ENCODE measurements at regions of chr12 and their contacts with region 1.

Region 1: GRCh38 chr12:117025481-117026151 is 73.6 kb downstream of the TESC start:
- DNase-seq: peak; percentile 79 to 92 (median 86)
- ATAC-seq: peak; percentile 91 to 93 (median 92)
- H3K4me3 ChIP-seq: no peak overlapping the region
- H3K27ac ChIP-seq: peak overlapping the region in 3 of 4 donors; percentile 28 to 65 (median 56)
- H3K4me1 ChIP-seq: peaks cover 10 to 22% (median 19%) of the 10 kb centered on the region in 3 donors
- H3K27me3 ChIP-seq: no peaks in the 10 kb centered on the region
- CTCF ChIP-seq: peak; percentile 88 to 95 (median 91)

Region 2: DNA sequence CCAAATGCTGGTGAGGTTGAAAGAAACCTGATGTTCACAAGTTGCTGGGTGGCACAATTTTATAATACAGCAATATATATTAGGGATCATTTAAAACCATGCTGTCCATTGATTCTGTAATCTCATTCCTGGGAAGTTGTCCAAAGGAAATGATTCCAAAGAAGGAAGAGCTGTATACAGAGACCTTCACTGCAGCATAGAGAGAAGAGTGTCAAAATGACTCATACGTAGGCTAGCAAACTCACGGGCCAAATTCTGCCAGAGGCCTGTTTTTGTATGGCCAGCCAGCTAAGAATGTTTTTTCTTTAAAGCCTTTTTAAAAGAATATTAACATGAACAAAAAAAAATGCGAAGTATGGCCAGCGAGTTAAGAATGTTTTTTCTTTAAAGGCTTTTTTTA is 678.9 kb before region 1 on chr12:
- intact Hi-C with region 1: no loop called
- DNase-seq: peak in 1 of 6 donors; percentile 47
- ATAC-seq: peak; percentile 79 to 90 (median 86)
- H3K4me3 ChIP-seq: no peak overlapping the region
- H3K27ac ChIP-seq: no peak overlapping the region
- H3K4me1 ChIP-seq: peaks cover 0 to 15% (median 10%) of the 10 kb centered on the region in 3 donors
- H3K27me3 ChIP-seq: no peaks in the 10 kb centered on the region
- CTCF ChIP-seq: no peak

Region 3: GRCh38 chr12:117119592-117120198 is 94.1 kb after region 1 on chr12:
- intact Hi-C with region 1: loop called (anchors 2 to 10 kb)
- DNase-seq: peak in 1 of 6 donors; percentile 60
- ATAC-seq: peak; percentile 36 to 72 (median 62)
- H3K4me3 ChIP-seq: no peak overlapping the region
- H3K27ac ChIP-seq: no peak overlapping the region
- H3K4me1 ChIP-seq: peaks cover 0 to 6% (median 5%) of the 10 kb centered on the region in 3 donors
- H3K27me3 ChIP-seq: no peaks in the 10 kb centered on the region
- CTCF ChIP-seq: peak; percentile 52 to 80 (median 66)

Measured in pancreas (tissue), 10 donors.